Natural killer cell (primary cell): ENCODE measurements at regions of chr9 and their contacts with region 1.

Region 1: DNA sequence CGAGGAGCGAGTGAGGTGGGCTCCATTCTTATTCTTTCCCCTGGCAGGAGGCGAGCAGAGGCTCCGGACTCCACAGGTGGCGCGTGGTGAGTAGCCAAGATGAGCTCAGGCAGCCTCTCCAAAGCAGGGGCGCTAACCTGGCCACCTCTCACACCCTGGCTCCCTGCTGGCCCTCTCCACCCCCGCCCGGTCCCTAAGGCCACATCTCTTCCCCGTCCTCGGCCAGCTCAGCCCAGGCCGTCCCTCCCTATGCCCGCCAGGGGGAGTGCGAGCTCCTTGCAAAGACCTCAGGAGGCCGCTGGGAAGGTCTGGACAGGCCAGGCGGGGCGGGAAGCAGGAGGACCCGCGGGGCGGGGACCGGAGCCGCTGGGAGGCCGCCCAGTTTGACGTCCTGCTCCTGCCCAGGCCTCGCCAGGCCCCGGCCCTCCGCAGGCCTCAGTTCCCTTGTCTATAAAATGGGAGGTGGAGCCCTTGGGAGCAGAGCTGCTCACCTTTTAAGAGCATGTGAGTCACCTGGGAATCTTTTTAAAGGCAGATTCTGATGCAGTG is 46.3 kb upstream of the GGTA1 start:
- DNase-seq: peak; percentile 68 to 74
- ATAC-seq: peak; percentile 76 to 84 (median 81)
- H3K4me3 ChIP-seq: no peak overlapping the region
- H3K4me3 Mint-ChIP-seq: no peak overlapping the region
- H3K27ac ChIP-seq: no peak overlapping the region
- H3K27ac Mint-ChIP-seq: no peak overlapping the region
- H3K4me1 ChIP-seq: peaks cover 17% of the 10 kb centered on the region
- H3K4me1 Mint-ChIP-seq: peaks cover 0 to 6% of the 10 kb centered on the region in 2 donors
- H3K27me3 ChIP-seq: no peaks in the 10 kb centered on the region
- H3K27me3 Mint-ChIP-seq: peaks cover 13% of the 10 kb centered on the region in 2 donors
- CTCF ChIP-seq: peak; percentile 94

Region 2: DNA sequence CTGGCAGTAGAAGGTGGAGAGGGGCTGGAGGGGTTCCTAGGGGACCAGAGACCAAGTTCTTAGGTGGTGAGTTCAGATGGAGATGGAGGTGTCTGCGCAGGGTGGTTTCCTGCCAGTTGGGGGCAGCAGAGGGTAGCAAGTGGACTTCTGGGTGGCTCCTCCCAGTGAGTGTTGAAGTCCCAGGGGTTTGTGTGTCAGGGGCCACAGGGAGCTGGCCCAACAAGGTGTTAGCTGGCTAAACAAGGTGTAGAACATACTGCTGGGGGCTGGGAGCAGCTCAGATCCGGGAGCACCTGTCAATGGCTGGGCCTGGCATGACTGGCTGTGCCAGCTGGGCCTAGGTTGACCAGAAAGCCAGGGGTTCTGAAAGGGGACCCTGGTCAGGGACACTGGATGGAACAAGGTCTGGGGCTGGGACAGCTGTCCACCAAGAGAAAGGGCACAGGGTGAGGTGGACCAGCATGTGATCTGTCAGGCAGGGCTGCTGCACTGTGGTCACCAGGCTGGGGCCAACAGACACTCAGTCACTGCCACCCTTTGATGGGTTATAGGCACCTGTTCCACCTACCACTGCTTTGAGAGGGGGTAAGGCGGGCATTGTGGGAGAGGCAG is 141.1 kb after region 1 on chr9:
- intact Hi-C with region 1: loop called (anchors 1 kb)
- DNase-seq: peak; percentile 65 to 70
- ATAC-seq: peak; percentile 71 to 94 (median 92)
- H3K4me3 ChIP-seq: no peak overlapping the region
- H3K4me3 Mint-ChIP-seq: no peak overlapping the region
- H3K27ac ChIP-seq: no peak overlapping the region
- H3K27ac Mint-ChIP-seq: no peak overlapping the region
- H3K4me1 ChIP-seq: no peaks in the 10 kb centered on the region
- H3K4me1 Mint-ChIP-seq: peaks cover 0 to 6% of the 10 kb centered on the region in 2 donors
- H3K27me3 ChIP-seq: no peaks in the 10 kb centered on the region
- H3K27me3 Mint-ChIP-seq: peaks cover 11 to 15% of the 10 kb centered on the region in 2 donors
- CTCF ChIP-seq: peak; percentile 73

Region 3: DNA sequence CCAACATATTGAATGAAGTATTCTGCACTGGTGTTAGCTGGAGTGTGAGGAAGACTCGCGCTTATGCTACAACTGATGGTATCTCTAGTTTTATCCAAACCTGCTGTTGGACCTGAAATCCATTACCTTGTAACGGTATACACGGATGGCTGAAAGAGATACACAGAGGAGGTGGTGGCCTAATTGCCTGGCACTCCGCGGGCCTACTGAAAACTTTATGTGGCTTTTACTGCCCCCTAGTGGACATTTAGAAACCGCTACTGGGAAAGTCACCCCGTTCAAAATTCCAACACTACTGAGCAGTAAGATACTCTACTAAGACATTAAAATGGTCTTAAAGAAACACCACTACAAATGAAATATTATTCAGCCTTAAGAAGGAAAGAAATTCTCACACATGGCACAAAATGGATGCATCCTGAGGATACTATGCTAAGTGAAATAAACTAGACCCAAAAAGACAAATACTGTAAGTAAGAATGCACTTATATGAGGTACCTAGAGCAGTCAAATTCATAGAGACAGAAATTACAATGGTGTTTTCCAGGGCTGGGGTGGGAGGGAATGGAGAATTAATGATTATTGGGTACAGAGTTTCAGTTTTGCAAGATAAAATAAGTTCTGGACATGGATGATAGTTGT is 446.7 kb after region 1 on chr9:
- intact Hi-C with region 1: loop called (anchors 1 kb)
- DNase-seq: peak; percentile 20 to 77
- ATAC-seq: peak; percentile 54 to 77 (median 61)
- H3K4me3 ChIP-seq: no peak overlapping the region
- H3K4me3 Mint-ChIP-seq: no peak overlapping the region
- H3K27ac ChIP-seq: no peak overlapping the region
- H3K27ac Mint-ChIP-seq: no peak overlapping the region
- H3K4me1 ChIP-seq: no peaks in the 10 kb centered on the region
- H3K4me1 Mint-ChIP-seq: no peaks in the 10 kb centered on the region
- H3K27me3 ChIP-seq: no peaks in the 10 kb centered on the region
- H3K27me3 Mint-ChIP-seq: no peaks in the 10 kb centered on the region
- CTCF ChIP-seq: peak; percentile 87

Region 4: DNA sequence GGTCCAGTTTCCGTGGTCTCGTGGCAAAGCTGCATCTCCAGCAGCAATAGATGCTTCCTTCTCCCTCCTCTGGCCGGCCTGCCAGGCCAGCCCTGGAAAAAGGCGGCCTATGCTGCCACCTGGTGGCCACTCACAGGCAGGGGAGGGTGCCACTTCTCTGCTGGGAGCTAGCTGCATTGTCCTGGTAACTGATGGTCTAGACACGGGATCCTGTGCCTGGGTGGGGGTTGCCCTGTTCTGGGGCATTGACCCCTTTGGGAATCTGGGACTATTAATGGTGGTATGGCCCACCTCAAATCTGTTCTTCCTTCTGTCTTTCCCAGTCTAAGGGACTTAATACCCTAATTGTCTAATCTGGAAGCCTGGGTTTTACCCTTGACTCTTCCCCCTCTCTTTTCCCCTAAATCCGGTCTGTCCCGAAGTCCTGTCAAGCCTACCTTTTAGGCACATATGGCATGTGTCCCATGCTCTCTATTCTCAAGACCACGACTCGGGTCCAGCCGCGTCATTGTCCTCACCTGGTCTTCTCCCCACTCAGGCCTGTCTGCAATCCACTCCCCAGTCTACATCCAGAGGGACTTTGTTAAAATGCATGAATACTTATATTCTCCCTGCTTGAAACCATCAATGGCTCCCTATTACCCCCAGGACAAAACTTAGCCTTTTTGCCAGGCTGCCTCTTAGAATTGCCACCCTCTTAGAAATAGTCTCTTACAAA is 804.8 kb after region 1 on chr9:
- intact Hi-C with region 1: loop called (anchors 10 kb)
- DNase-seq: peak; percentile 78 to 83
- ATAC-seq: peak; percentile 84 to 88 (median 85)
- H3K4me3 ChIP-seq: no peak overlapping the region
- H3K4me3 Mint-ChIP-seq: no peak overlapping the region
- H3K27ac ChIP-seq: no peak overlapping the region
- H3K27ac Mint-ChIP-seq: no peak overlapping the region
- H3K4me1 ChIP-seq: peaks cover 12% of the 10 kb centered on the region
- H3K4me1 Mint-ChIP-seq: peaks cover 0 to 17% of the 10 kb centered on the region in 2 donors
- H3K27me3 ChIP-seq: peaks cover 5% of the 10 kb centered on the region
- H3K27me3 Mint-ChIP-seq: peaks cover 20 to 29% of the 10 kb centered on the region in 2 donors
- CTCF ChIP-seq: peak; percentile 94